ENCODE measurements at regions of chr12 and their contacts with region 1.

Region 1: GRCh38 chr12:6873094-6874014 is at the start of gene SPSB2:
- DNase-seq: peak; percentile 100
- H3K4me3 ChIP-seq: peak within 1 kb of the TSS; percentile 89
- H3K4me3 Mint-ChIP-seq: peak within 1 kb of the TSS; percentile 98
- H3K27ac Mint-ChIP-seq: peak within 1 kb of the TSS; percentile 95
- H3K4me1 ChIP-seq: peaks cover 26% of the 10 kb centered on the region
- H3K4me1 Mint-ChIP-seq: peaks cover 47% of the 10 kb centered on the region
- H3K27me3 ChIP-seq: no peaks in the 10 kb centered on the region
- H3K27me3 Mint-ChIP-seq: no peaks in the 10 kb centered on the region
- CTCF ChIP-seq: no peak
- total RNA-seq, gene SPSB2: 23.7 and 24.7 TPM in 2 replicates

Region 2: DNA sequence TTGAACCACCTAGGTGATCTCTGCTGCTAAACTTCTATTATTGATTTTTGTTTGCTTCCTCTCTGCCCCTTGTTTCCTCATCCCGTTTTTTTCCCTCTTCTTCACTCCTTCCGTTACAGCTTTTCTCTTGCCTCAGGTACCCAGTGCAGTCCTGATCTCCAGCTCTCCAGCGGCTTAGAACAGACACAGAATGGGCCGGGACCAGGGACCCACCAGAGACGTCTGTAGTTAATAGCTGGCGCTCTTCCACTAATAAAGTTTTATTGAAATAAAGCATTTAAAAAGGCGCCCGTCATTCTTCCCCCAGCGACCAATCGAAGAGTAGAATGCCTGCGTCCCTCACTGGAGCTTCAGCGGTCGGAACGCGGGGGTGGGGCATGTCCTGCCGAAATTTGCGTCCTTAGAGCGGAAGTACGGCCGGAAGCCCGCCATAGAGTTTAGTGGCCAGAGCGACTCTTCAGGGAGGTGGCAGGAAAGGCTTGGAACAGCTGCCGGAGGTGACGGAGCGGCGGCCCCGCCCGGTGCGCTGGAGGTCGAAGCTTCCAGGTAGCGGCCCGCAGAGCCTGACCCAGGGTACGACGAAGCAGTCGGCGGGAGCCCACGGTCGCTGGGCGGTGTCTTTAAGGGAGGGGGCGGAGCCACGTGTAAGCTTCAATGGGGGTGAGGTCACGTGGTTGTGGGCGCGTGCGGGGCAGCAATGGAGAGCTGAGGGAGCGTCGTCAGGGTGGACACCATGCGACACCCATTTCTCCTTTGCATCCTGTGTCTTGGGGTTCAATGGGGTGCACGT is 149.6 kb before region 1 on chr12 and contains the start of gene COPS7A:
- CTCF ChIA-PET with region 1: interaction called, 4 read pairs
- POLR2A ChIA-PET with region 1: interaction called, 10 read pairs
- intact Hi-C with region 1: no loop called
- DNase-seq: peak; percentile 100
- H3K4me3 ChIP-seq: peak within 1 kb of the TSS; percentile 63
- H3K4me3 Mint-ChIP-seq: peak within 1 kb of the TSS; percentile 73
- H3K27ac Mint-ChIP-seq: peak within 1 kb of the TSS; percentile 80
- H3K4me1 ChIP-seq: peaks cover 11% of the 10 kb centered on the region; the same call in 1 of the 2 replicates
- H3K4me1 Mint-ChIP-seq: peaks cover 11% of the 10 kb centered on the region
- H3K27me3 ChIP-seq: no peaks in the 10 kb centered on the region
- H3K27me3 Mint-ChIP-seq: no peaks in the 10 kb centered on the region
- CTCF ChIP-seq: no peak
- total RNA-seq, gene COPS7A: 56.8 and 61.9 TPM in 2 replicates

Region 3: DNA sequence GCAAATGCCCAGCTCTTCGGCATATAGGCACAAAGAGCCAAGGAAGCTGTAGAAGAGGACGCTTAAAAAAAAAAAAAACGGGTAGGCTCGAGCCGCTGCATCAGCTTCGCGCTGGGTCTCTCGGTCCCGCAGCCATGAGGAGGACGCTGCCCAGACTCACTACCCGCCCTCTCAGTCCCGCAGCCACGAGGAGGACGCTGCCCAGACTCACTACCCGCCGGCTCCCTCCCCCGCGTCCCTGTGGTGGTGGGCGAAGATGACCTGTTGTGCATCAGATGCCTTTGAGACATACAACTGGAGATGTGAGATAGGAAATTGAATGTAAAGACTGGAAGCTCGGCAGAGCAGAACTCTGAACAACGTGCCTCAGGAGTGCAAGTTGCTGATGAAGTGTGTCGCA is 11.2 kb after region 1 on chr12:
- CTCF ChIA-PET with region 1: interaction called, 14 read pairs
- POLR2A ChIA-PET with region 1: interaction called, 12 read pairs
- intact Hi-C with region 1: loop called (anchors 1 kb)
- DNase-seq: no peak
- H3K4me3 ChIP-seq: no peak overlapping the region
- H3K4me3 Mint-ChIP-seq: peak overlapping the region; percentile 0
- H3K27ac Mint-ChIP-seq: peak overlapping the region; percentile 98
- H3K4me1 ChIP-seq: peaks cover 53% of the 10 kb centered on the region
- H3K4me1 Mint-ChIP-seq: peaks cover 21% of the 10 kb centered on the region
- H3K27me3 ChIP-seq: no peaks in the 10 kb centered on the region
- H3K27me3 Mint-ChIP-seq: no peaks in the 10 kb centered on the region
- CTCF ChIP-seq: no peak

Region 4: DNA sequence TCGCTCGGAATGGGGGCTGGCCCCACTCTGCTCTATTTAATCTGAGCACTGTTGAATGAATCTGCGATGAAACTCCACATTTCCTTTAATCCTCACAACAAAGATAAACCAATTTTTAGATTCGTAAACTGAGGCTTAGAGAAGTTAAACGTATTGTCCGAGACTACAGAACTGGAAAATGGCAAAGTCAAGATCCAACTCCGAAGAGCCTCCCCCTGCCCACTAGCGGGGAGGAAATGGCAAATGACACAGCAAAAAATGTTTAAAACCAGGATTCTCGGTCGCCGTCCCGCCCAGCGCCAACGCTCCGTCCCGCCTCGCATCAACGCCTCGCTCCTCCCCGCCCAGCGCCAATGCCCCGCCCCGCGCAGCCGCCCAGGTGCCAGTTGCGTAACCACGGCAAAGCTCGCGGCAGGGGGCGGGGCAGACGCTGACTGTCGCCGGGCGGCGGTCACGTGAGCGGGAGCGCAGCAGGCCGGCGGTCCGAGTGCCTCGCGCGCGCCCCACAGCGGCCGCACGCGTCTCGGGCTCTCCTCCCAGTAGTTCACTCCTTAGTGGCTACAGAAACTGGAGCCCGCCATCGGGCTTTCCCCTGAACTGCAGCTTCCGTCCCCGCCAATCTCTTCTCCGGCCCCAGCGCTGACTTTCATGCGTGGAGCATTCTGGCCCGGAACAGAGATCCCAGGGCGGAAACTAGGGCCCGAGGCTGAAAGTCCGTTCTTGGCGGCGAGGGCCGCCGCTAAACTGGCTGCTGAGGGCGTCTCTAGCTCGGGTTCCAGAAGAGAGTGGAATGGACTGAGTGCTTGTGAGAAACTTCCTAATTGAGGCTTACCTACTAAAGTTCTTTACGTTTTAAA is 17.7 kb after region 1 on chr12:
- CTCF ChIA-PET with region 1: interaction called, 87 read pairs
- POLR2A ChIA-PET with region 1: interaction called, 56 read pairs
- intact Hi-C with region 1: loop called (anchors 1 kb)
- DNase-seq: peak; percentile 98 to 100
- H3K4me3 ChIP-seq: peak overlapping the region; percentile 34
- H3K4me3 Mint-ChIP-seq: peak overlapping the region; percentile 80
- H3K27ac Mint-ChIP-seq: peak overlapping the region; percentile 96
- H3K4me1 ChIP-seq: peaks cover 37% of the 10 kb centered on the region
- H3K4me1 Mint-ChIP-seq: peaks cover 5% of the 10 kb centered on the region
- H3K27me3 ChIP-seq: no peaks in the 10 kb centered on the region
- H3K27me3 Mint-ChIP-seq: no peaks in the 10 kb centered on the region
- CTCF ChIP-seq: peak; percentile 82 to 95

Region 5: GRCh38 chr12:6904280-6905278 is 31.2 kb after region 1 on chr12 and contains the start of gene LRRC23:
- CTCF ChIA-PET with region 1: interaction called, 10 read pairs
- POLR2A ChIA-PET with region 1: interaction called, 4 read pairs
- intact Hi-C with region 1: loop called (anchors 1 kb)
- DNase-seq: peak; percentile 98 to 99
- H3K4me3 ChIP-seq: peak within 1 kb of the TSS; percentile 64
- H3K4me3 Mint-ChIP-seq: no peak within 1 kb of the TSS
- H3K27ac Mint-ChIP-seq: no peak within 1 kb of the TSS
- H3K4me1 ChIP-seq: peaks cover 20% of the 10 kb centered on the region
- H3K4me1 Mint-ChIP-seq: peaks cover 10% of the 10 kb centered on the region
- H3K27me3 ChIP-seq: no peaks in the 10 kb centered on the region
- H3K27me3 Mint-ChIP-seq: no peaks in the 10 kb centered on the region
- CTCF ChIP-seq: no peak
- total RNA-seq, gene LRRC23: 7.8 and 8.6 TPM in 2 replicates

Region 6: GRCh38 chr12:6937481-6938297 is 64.3 kb after region 1 on chr12:
- CTCF ChIA-PET with region 1: interaction called, 37 read pairs
- POLR2A ChIA-PET with region 1: interaction called, 17 read pairs
- intact Hi-C with region 1: loop called (anchors 1 kb)
- DNase-seq: peak; percentile 97
- H3K4me3 ChIP-seq: peak overlapping the region; percentile 55
- H3K4me3 Mint-ChIP-seq: peak overlapping the region; percentile 73
- H3K27ac Mint-ChIP-seq: peak overlapping the region; percentile 92
- H3K4me1 ChIP-seq: peaks cover 10% of the 10 kb centered on the region
- H3K4me1 Mint-ChIP-seq: peaks cover 25% of the 10 kb centered on the region
- H3K27me3 ChIP-seq: no peaks in the 10 kb centered on the region
- H3K27me3 Mint-ChIP-seq: no peaks in the 10 kb centered on the region
- CTCF ChIP-seq: peak; percentile 98 to 99

Region 7: DNA sequence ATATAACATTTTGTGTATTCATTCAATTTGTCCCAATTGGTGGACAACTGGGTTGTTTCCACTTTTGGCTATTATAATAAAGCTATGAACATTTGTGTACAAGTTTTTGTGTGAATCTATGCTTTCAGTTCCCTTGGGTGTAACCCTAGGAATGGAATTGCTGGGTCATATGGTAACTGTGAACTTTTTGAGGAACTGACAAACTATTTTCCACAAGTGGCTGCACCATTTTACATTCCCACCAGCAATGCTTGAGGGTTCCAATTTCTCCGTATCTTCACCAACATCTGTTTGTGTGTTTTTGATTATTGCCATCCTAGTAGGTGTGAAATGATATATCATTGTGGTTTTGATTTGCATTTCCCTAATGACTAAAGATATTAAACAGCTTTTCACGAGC is 132.0 kb after region 1 on chr12:
- CTCF ChIA-PET with region 1: no interaction called
- POLR2A ChIA-PET with region 1: no interaction called
- intact Hi-C with region 1: no loop called
- DNase-seq: no peak
- H3K4me3 ChIP-seq: no peak overlapping the region
- H3K4me3 Mint-ChIP-seq: no peak overlapping the region
- H3K27ac Mint-ChIP-seq: no peak overlapping the region
- H3K4me1 ChIP-seq: no peaks in the 10 kb centered on the region; the same call in 1 of the 2 replicates
- H3K4me1 Mint-ChIP-seq: peaks cover 23% of the 10 kb centered on the region
- H3K27me3 ChIP-seq: no peaks in the 10 kb centered on the region
- H3K27me3 Mint-ChIP-seq: no peaks in the 10 kb centered on the region
- CTCF ChIP-seq: no peak